IMR-90 (cell line): ENCODE measurements at regions of chr10 and their contacts with region 1.

Region 1: DNA sequence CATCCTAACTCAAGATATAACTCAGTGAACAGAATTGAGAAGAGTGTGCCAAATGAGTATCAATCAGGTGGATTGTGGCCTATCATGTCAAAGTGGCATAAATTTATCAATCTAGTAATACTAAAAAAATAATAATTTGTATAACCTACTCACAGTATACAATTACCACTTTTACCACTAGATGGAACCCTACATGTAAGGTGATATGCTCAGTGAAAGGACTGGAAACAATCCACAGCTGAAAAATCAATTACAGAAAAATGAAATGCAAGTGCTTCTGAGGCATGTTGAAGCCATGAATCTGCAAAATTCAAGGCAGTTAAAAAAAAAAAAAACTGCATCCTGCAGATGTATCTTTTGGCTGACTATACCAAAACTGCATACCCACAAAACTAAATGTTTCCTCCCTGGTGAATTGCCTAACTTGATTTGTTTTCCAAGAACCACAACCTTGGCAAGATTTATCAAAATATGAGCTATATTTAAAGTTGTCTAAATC is 13.9 kb downstream of the ARHGAP19 start:
- DNase-seq: peak; percentile 93
- ATAC-seq: peak; percentile 97
- H3K4me3 ChIP-seq: no peak overlapping the region
- H3K27ac ChIP-seq: no peak overlapping the region
- H3K4me1 ChIP-seq: peaks cover 6% of the 10 kb centered on the region; the same call in 1 of the 2 replicates
- H3K27me3 ChIP-seq: no peaks in the 10 kb centered on the region
- CTCF ChIP-seq: peak; percentile 61
- POLR2A ChIP-seq: no peak
- RAD21 ChIP-seq: peak; percentile 60

Region 2: GRCh38 chr10:97261183-97261582 is 17.4 kb before region 1 on chr10:
- CTCF ChIA-PET with region 1: interaction called, 11 read pairs
- POLR2A ChIA-PET with region 1: no interaction called
- dilution Hi-C with region 1: no loop called
- in situ Hi-C with region 1: no loop called
- intact Hi-C with region 1: no loop called
- DNase-seq: no peak
- ATAC-seq: no peak
- H3K4me3 ChIP-seq: no peak overlapping the region
- H3K27ac ChIP-seq: no peak overlapping the region
- H3K4me1 ChIP-seq: no peaks in the 10 kb centered on the region
- H3K27me3 ChIP-seq: no peaks in the 10 kb centered on the region
- CTCF ChIP-seq: no peak
- POLR2A ChIP-seq: no peak
- RAD21 ChIP-seq: no peak

Region 3: DNA sequence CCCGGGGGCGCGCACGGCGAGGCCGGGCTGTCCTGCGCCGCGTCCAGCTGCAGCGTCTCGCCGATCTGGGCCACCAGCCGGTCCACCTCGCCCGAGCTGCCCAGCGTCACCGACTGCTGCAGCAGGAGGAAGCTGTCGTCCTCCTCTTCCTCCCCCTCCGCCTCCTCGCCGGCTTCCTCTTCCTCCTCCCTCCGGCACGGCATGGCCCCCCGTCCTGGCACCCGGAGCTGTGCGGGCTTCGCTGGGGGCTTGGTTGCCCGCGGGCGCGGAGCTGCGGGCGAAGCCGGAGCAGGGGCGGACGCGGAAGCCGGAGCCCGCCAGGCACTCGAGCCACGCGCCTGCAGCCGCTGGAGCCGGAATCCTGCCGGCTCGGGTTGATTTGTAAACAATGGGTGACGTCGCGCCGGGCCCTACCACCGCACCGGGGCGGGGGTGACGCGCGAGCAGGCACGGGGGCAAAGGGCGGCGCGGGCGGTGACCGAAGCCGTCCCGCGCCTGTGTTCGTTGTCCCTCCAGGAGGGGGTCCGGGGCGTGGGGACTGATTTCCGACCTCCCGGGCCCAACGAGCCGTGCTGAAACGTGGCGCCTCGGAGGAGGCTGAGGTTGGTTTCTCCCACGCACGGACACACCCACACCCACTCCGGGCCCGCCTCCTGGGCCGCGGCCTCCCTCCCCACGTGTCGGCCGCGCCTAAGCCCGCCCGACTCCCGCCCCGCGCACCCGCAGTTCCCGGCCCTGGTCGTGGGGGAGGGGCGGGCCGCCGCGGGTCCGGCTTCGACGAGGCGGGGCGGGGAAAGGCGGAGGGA is 56.0 kb after region 1 on chr10 and contains the start of gene FRAT2:
- CTCF ChIA-PET with region 1: interaction called, 23 read pairs
- POLR2A ChIA-PET with region 1: no interaction called
- dilution Hi-C with region 1: no loop called
- in situ Hi-C with region 1: no loop called
- intact Hi-C with region 1: loop called (anchors 2 kb)
- DNase-seq: peak; percentile 91
- ATAC-seq: peak; percentile 90
- H3K4me3 ChIP-seq: peak within 1 kb of the TSS; percentile 72
- H3K27ac ChIP-seq: peak within 1 kb of the TSS; percentile 99
- H3K4me1 ChIP-seq: peaks cover 11% of the 10 kb centered on the region
- H3K27me3 ChIP-seq: peaks cover 19% of the 10 kb centered on the region
- CTCF ChIP-seq: no peak
- POLR2A ChIP-seq: peak; percentile 73
- RAD21 ChIP-seq: no peak
- total RNA-seq, gene FRAT2: 2.5 and 2.8 TPM in 2 replicates

Region 4: DNA sequence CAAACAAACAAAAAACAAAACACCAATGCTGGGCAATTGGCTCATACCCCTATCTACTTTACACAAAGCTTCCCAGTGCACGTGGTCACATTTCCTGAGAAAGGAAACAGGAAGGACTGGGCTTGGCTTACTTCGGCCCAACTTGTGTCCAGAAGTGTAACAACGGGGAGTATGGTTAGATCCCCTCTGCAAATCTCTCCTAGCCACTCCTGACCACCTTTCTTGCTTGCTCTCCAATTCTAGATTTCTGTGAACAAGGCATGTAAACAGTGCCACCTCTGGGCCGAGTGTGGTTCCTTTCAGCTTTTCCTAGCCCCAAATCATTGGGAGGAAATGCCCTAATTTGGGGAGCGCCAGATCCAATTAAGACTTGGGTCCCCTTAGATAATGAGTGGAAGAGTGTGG is 77.0 kb after region 1 on chr10:
- CTCF ChIA-PET with region 1: no interaction called
- POLR2A ChIA-PET with region 1: no interaction called
- dilution Hi-C with region 1: no loop called
- in situ Hi-C with region 1: no loop called
- intact Hi-C with region 1: loop called (anchors 2 kb)
- DNase-seq: no peak
- ATAC-seq: peak; percentile 27; the same call in 1 of the 2 replicates
- H3K4me3 ChIP-seq: no peak overlapping the region
- H3K27ac ChIP-seq: no peak overlapping the region
- H3K4me1 ChIP-seq: no peaks in the 10 kb centered on the region
- H3K27me3 ChIP-seq: no peaks in the 10 kb centered on the region
- CTCF ChIP-seq: peak; percentile 31
- POLR2A ChIP-seq: no peak
- RAD21 ChIP-seq: peak; percentile 37

Region 5: GRCh38 chr10:97376413-97376812 is 97.9 kb after region 1 on chr10:
- CTCF ChIA-PET with region 1: no interaction called
- POLR2A ChIA-PET with region 1: interaction called, 17 read pairs
- dilution Hi-C with region 1: no loop called
- in situ Hi-C with region 1: no loop called
- intact Hi-C with region 1: no loop called
- DNase-seq: no peak
- ATAC-seq: no peak
- H3K4me3 ChIP-seq: no peak overlapping the region
- H3K27ac ChIP-seq: no peak overlapping the region
- H3K4me1 ChIP-seq: no peaks in the 10 kb centered on the region
- H3K27me3 ChIP-seq: no peaks in the 10 kb centered on the region
- CTCF ChIP-seq: no peak
- POLR2A ChIP-seq: no peak
- RAD21 ChIP-seq: no peak